Dorsolateral prefrontal cortex (tissue), 120 donors: ENCODE measurements at regions of chr1 and their contacts with region 1.

Region 1: DNA sequence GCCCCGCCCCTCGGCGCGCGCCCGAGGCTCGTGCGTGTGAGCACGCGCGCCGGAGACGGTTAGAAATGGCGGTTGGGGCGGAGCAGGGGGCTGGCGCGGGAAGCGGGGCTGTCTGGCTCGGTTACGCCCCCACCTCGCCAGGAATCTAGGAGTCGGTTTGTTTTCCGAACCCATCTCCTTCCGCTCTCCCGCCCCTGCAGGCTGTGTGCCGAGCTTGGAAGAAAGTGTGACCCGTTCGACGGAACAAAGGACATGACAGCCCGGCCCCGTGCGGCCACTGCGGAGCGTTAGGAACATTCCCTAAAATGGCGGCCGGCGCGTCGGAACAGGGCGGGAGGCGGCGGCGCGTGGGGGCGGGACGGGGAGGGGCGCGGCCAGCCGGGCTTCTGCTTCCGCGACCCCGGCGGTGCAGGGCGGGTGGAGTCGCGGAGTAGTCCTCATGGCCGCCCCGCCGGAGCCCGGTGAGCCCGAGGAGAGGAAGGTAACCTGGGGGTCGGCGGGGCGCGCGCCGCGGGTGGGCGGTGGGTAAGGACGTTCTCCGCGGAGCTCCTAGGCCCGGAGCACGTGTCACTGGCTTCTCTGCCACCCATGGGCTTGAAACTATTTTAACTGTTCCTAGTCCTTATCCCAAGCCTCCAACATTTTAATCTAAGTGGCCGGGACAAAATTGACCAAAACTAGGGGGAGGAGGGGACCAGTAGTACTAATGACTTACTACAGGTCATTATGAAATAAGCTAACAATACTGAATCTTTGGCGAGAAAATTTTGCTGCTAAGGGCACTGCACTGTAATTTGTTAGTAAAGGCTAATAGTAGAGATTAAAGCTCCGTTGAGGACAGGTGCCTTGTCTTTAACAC is at the start of gene COX20:
- DNase-seq: peak; percentile 70 to 88 (median 82)
- H3K4me3 ChIP-seq: peak within 1 kb of the TSS; percentile 50 to 90 (median 78)
- H3K27ac ChIP-seq: peak within 1 kb of the TSS; percentile 96 to 100 (median 100)
- H3K27me3 ChIP-seq: no peaks in the 10 kb centered on the region
- CTCF ChIP-seq: peak in 18 of 56 donors; percentile 4 to 38 (median 15)
- total RNA-seq, gene COX20: 23.7 to 50.5 (median 37.6) TPM

Region 2: DNA sequence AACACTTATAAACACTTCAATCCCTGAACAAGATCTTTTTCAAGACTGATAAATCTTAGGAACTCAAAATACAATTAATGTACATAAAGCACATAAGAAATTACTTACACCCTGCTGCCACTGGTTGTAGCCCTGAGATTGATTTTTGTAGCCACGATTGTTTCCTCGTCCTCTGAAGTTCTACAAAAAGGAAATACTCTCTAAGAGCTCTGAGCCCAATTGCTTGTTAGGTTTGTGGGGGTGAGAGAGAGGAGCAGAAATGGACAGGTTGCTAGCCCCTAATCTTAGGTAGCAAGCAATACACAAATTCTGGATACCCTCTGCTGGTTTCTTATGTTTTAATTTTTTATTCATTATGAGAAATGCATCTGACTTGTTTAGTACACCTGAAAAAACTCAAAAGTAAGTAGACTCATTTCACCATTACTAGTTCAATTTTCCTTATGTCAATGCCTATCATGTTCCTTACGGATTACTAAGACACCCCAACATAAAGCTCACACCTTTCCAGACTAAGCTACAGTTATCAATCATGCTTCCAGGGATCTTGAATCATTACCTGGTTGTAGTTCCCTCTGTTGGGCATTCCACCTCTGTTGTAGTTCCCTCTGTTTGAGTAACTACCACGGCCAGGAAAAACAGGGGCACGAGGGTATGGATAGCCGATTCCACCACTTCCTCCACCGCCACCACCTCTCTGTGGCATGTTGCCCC is 19.5 kb after region 1 on chr1:
- intact Hi-C with region 1: loop called in 1 of 2 experiments (anchors 2 kb)
- DNase-seq: no peak
- H3K4me3 ChIP-seq: no peak overlapping the region
- H3K27ac ChIP-seq: peak overlapping the region in 12 of 59 donors; percentile 2 to 40 (median 16)
- H3K27me3 ChIP-seq: no peaks in the 10 kb centered on the region
- CTCF ChIP-seq: no peak

Region 3: GRCh38 chr1:244970661-244971551 is 135.4 kb after region 1 on chr1:
- intact Hi-C with region 1: loop called (anchors 1 kb)
- DNase-seq: peak; percentile 87 to 95 (median 93)
- H3K4me3 ChIP-seq: peak overlapping the region; percentile 56 to 89 (median 79)
- H3K27ac ChIP-seq: peak overlapping the region; percentile 96 to 100 (median 100)
- H3K27me3 ChIP-seq: no peaks in the 10 kb centered on the region
- CTCF ChIP-seq: peak in 55 of 56 donors; percentile 27 to 77 (median 56)